ENCODE measurements at regions of chr14 and their contacts with region 1.

Region 1: DNA sequence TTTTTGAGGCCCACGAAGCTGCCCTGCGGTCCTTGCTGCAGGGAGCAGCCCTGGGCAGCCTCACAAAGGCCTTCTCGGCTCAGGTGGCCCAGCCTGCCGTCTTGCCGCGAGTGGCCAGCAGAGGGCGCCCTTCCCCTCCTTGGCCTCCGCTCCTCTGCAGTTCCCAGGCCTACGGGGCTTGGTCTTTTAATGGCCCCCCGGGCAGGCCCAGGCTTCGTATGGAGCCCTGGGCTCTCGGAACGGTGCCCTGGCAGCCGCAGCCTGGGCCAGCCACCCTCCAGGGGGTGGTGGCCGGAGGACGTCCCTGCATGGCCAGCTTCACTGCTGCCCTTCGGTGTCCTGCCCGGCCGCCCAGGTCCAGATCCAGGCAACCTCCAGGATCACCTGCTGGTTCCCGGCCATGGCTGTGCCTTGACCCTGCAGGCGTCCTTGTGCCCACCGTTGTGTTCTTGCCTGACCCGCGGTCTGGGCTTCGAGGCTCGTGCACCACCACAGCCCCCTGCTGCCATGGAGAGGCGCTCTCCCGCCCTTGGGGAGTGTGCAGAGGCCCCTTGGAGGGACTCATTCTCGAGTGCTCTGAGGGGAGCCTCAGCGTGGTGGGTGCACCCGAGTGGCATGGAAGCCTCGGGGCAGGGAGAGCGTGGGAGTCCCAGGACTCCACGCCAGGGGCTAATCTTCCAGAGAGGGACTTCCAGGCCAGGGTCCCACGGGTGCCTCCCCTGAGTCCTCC is 9.4 kb downstream of the ASPG start:
- DNase-seq: peak; percentile 94
- ATAC-seq: peak; percentile 87
- H3K4me3 Mint-ChIP-seq: no peak overlapping the region
- H3K27ac Mint-ChIP-seq: no peak overlapping the region; the same call in 1 of the 2 replicates
- H3K4me1 Mint-ChIP-seq: peaks cover 5% of the 10 kb centered on the region
- H3K27me3 Mint-ChIP-seq: no peaks in the 10 kb centered on the region
- CTCF ChIP-seq: peak; percentile 97

Region 2: GRCh38 chr14:104108216-104108569 is 13.3 kb after region 1 on chr14:
- CTCF ChIA-PET with region 1: interaction called, 44 read pairs
- POLR2A ChIA-PET with region 1: no interaction called
- DNase-seq: peak; percentile 11
- ATAC-seq: peak; percentile 28; the same call in 1 of the 2 replicates
- H3K4me3 Mint-ChIP-seq: no peak overlapping the region
- H3K27ac Mint-ChIP-seq: no peak overlapping the region
- H3K4me1 Mint-ChIP-seq: peaks cover 2% of the 10 kb centered on the region; the same call in 1 of the 2 replicates
- H3K27me3 Mint-ChIP-seq: no peaks in the 10 kb centered on the region
- CTCF ChIP-seq: no peak

Region 3: DNA sequence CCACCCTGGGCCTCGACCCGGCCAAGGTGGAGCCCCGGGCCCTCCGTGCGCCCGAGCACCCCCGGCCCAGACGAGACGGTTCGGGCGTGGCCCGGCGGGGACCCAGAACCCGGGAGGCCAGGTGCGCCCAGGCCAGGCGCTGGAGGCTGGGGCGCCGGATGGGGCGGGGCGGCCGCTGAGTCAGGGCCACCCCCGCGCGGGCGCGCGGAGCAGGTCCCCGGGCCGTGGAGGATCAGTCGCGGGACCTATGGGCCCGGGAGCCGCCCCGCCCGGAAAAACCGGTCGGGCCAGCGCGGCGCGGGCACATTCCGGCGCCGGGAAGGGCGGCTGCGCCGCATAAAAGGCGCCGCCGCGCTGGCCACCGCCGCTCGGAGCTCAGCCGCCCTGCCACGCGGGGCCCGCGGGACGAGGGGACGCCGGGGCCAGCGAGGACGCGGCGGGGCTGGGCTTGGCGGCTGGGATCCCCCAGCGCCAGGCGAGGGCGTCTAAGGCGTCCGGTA is 21.9 kb after region 1 on chr14:
- CTCF ChIA-PET with region 1: interaction called, 13 read pairs
- POLR2A ChIA-PET with region 1: no interaction called
- DNase-seq: peak; percentile 34
- ATAC-seq: peak; percentile 36
- H3K4me3 Mint-ChIP-seq: peak overlapping the region; percentile 46; the same call in 1 of the 2 replicates
- H3K27ac Mint-ChIP-seq: no peak overlapping the region
- H3K4me1 Mint-ChIP-seq: no peaks in the 10 kb centered on the region
- H3K27me3 Mint-ChIP-seq: peaks cover 26% of the 10 kb centered on the region
- CTCF ChIP-seq: no peak

Measured in WTC11 (cell line).